ENCODE measurements at regions of chrX and their contacts with region 1.

Region 1: DNA sequence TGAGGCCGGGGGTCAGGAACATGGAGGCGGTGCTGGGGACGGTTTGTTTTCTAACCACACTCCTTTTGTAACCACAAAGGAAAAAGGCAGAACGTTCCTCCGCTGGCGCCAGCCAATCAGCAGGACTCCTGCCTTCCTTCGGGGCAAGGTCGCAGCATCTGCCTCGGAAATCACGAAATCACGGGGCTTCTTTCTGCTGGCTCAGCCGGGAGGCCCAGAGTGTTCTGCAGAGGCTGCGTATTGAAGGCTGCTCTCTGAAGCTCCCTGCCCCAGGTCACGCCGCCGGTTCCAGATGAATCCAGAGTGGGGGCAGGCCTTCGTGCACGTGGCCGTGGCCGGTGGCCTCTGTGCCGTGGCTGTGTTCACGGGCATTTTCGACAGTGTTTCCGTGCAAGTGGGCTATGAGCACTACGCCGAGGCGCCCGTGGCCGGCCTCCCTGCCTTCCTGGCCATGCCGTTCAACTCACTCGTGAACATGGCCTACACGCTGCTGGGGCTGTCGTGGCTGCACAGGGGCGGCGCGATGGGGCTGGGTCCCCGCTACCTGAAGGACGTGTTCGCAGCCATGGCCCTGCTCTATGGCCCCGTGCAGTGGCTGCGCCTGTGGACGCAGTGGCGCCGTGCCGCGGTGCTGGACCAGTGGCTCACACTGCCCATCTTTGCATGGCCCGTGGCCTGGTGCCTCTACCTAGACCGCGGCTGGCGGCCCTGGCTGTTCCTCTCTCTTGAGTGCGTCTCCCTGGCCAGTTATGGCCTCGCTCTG is 9.4 kb downstream of the TMEM187 start:
- DNase-seq: peak; percentile 74
- H3K4me3 Mint-ChIP-seq: peak overlapping the region; percentile 55
- H3K27ac Mint-ChIP-seq: peak overlapping the region; percentile 98
- H3K4me1 Mint-ChIP-seq: peaks cover 35% of the 10 kb centered on the region
- H3K27me3 Mint-ChIP-seq: no peaks in the 10 kb centered on the region

Region 2: GRCh38 chrX:154019633-154020528 is 37.9 kb after region 1 on chrX and contains the start of gene IRAK1:
- intact Hi-C with region 1: loop called (anchors 5 kb)
- DNase-seq: peak; percentile 49
- H3K4me3 Mint-ChIP-seq: peak within 1 kb of the TSS; percentile 88
- H3K27ac Mint-ChIP-seq: peak within 1 kb of the TSS; percentile 92
- H3K4me1 Mint-ChIP-seq: peaks cover 9% of the 10 kb centered on the region
- H3K27me3 Mint-ChIP-seq: no peaks in the 10 kb centered on the region
- total RNA-seq, gene IRAK1: 150 and 151 TPM in 2 replicates